Upper lobe of right lung (tissue), 1 donor: ENCODE measurements at regions of chr17 and their contacts with region 1.

Region 1: GRCh38 chr17:58710936-58711775 is 18.8 kb downstream of the RAD51C start:
- DNase-seq: no peak
- ATAC-seq: peak; percentile 47
- H3K4me3 ChIP-seq: no peak overlapping the region
- H3K27ac ChIP-seq: no peak overlapping the region
- H3K4me1 ChIP-seq: no peaks in the 10 kb centered on the region
- H3K27me3 ChIP-seq: no peaks in the 10 kb centered on the region
- CTCF ChIP-seq: peak; percentile 86

Region 2: DNA sequence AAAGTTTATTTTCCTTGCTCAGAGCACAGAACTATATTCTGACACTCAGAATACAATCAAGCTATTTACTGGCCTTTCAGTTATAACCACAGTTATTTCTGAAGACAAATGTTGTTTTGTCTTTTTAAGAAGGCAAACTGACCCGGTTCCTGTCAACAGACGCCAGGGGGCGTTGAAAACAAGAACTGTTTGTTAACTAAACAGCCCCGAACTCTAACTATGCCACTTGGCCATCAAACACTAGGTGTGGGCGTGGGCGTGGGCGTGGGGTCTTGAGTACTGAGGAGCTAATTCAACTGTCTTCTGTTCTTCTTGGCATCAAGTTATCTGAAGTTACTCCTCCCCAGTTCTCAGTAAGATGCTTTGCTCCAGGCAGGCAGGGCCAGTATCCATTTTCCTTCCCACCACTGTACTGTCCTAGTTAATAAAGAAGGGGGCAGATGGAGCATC is 133.5 kb before region 1 on chr17:
- intact Hi-C with region 1: no loop called
- DNase-seq: peak; percentile 69
- ATAC-seq: peak; percentile 58
- H3K4me3 ChIP-seq: no peak overlapping the region
- H3K27ac ChIP-seq: no peak overlapping the region
- H3K4me1 ChIP-seq: no peaks in the 10 kb centered on the region
- H3K27me3 ChIP-seq: no peaks in the 10 kb centered on the region
- CTCF ChIP-seq: peak; percentile 71

Region 3: DNA sequence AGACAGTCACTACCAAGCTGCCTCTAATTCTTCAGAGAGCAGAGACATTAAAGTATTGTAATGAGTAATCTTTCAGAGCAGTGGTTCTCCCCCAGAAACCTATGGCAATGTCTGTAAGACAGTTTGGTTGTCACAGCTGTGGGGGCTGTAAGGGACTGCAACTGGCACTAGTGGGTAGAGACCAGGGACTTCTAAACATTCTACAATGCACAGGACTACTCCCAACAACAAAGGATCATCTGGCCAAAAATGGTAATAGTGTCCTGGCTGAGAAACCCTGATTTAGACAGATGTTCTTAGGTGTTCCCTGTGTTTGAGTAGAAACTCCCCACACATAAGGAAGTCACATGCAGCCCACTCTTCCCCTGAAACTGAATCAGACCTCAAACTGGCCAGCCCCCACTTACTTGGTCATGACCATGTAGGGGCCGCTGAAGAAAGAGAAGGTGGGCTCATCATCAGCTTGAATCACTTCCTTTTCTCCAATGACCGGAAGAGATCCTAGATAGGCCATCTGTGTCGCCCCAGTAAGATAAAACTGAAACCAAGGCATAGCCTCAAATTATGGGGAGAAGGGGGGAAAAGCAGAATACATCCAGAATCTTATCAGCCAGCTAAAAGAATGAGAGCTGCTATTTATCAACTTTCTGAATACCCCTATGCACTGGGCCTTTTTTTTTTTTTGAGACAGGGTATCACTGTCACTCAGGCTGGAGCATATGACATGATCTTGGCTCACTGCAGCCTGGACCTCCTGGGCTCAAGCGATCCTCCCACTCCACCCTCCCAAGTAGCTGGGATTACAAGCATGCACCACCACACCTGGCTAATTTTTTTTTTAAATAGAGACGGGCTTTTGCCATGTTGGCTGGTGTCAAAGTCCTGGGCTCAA is 95.1 kb before region 1 on chr17:
- intact Hi-C with region 1: no loop called
- DNase-seq: no peak
- ATAC-seq: peak; percentile 45
- H3K4me3 ChIP-seq: no peak overlapping the region
- H3K27ac ChIP-seq: no peak overlapping the region
- H3K4me1 ChIP-seq: no peaks in the 10 kb centered on the region
- H3K27me3 ChIP-seq: no peaks in the 10 kb centered on the region
- CTCF ChIP-seq: no peak

Region 4: DNA sequence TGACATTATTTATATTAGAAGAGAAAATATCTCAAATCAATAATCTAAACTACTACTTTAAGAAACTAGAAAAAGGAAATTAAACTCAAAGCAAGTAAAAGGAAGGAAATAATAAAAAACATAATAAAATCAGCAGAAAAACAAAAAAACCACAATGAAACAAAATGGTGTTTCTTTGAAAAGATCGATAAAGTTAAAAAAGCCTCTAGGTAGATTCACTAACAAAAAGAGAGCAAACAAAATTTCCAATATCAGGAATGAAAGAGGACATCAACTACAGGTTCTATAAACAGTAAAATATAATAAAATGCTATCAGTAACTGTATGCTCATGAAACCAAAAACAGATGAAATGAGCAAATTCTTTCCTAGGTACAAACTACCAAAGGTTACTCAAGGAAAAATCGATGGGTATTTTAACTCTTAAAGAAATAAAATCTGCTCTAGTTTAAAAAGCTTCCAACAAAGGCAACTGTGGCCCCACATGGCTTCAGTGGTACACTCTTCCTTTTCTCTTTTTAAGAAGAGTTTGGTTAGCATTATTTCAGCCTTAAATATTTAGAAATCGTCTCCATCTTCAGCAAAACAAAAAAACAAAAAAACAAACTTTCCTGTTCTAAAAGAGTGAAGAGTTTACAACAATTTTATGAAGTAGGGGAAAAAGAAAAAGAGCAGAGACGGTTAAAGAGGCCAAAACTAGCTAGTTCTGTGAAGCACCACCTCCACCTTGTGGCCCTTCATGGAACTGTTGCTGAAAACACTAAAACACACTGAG is 293.4 kb after region 1 on chr17:
- intact Hi-C with region 1: loop called (anchors 10 kb)
- DNase-seq: no peak
- ATAC-seq: peak; percentile 89
- H3K4me3 ChIP-seq: no peak overlapping the region
- H3K27ac ChIP-seq: no peak overlapping the region
- H3K4me1 ChIP-seq: peaks cover 4% of the 10 kb centered on the region
- H3K27me3 ChIP-seq: no peaks in the 10 kb centered on the region
- CTCF ChIP-seq: peak; percentile 98